ENCODE measurements at regions of chr19 and their contacts with region 1.

Region 1: GRCh38 chr19:43555185-43555770 is 20.0 kb downstream of the XRCC1 start:
- DNase-seq: peak; percentile 87
- H3K4me3 Mint-ChIP-seq: no peak overlapping the region
- H3K27ac Mint-ChIP-seq: peak overlapping the region; percentile 38
- H3K4me1 Mint-ChIP-seq: peaks cover 9% of the 10 kb centered on the region
- H3K27me3 Mint-ChIP-seq: no peaks in the 10 kb centered on the region

Region 2: GRCh38 chr19:43407416-43408005 is 147.8 kb before region 1 on chr19:
- CTCF ChIA-PET with region 1: no interaction called
- POLR2A ChIA-PET with region 1: no interaction called
- intact Hi-C with region 1: no loop called
- DNase-seq: no peak
- H3K4me3 Mint-ChIP-seq: no peak overlapping the region
- H3K27ac Mint-ChIP-seq: no peak overlapping the region
- H3K4me1 Mint-ChIP-seq: no peaks in the 10 kb centered on the region
- H3K27me3 Mint-ChIP-seq: peaks cover 4% of the 10 kb centered on the region

Region 3: DNA sequence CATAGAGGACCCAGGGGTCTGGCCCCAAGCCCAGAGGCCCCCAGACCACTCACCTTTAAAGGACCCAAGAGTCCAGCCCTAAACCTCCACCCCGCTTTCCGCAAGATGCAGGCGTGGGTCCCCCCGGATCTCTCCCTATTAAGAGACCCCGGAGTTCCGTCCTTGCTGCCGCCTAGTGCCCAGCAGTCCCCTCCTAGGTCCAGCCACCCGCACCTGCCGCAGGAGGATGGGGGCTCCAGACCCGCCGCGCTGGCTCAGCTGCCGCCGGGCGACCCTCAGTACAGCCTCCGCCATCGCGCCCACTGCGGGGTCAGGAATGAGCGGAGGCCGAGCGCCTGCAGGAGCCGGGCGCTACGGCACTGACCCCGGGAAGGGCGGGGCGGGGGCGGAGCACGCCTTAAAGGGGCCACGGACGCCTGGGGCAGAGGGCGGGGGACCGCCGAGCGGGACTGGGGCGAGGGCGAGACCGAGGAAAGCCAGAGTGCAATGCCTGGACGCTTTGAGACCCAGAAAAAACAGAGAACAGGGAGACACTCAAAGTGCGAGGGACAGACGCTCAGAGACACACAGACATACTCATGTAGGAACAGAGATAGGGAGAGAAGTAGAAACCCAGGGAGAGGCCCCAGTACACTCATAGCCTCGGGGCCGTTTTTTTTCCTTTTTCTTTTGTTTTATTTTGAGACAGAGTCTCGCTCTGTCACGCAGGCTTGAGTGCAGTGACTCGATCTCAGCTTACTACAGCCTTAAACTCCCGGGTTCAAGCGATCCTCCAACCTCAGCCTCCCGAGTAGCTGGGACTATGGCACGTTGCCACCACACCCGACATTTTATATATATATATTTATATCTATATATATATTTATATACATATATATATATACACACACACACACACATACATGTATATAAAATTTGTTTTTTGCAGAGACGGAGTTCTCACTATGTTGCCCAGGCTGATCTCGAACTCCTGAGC is 28.1 kb before region 1 on chr19 and contains the start of gene ETHE1:
- CTCF ChIA-PET with region 1: interaction called, 79 read pairs
- POLR2A ChIA-PET with region 1: interaction called, 3 read pairs
- intact Hi-C with region 1: no loop called
- DNase-seq: peak; percentile 85
- H3K4me3 Mint-ChIP-seq: peak within 1 kb of the TSS; percentile 92
- H3K27ac Mint-ChIP-seq: peak within 1 kb of the TSS; percentile 98
- H3K4me1 Mint-ChIP-seq: peaks cover 24% of the 10 kb centered on the region
- H3K27me3 Mint-ChIP-seq: no peaks in the 10 kb centered on the region
- total RNA-seq, gene ETHE1: 104 to 112 TPM

Region 4: DNA sequence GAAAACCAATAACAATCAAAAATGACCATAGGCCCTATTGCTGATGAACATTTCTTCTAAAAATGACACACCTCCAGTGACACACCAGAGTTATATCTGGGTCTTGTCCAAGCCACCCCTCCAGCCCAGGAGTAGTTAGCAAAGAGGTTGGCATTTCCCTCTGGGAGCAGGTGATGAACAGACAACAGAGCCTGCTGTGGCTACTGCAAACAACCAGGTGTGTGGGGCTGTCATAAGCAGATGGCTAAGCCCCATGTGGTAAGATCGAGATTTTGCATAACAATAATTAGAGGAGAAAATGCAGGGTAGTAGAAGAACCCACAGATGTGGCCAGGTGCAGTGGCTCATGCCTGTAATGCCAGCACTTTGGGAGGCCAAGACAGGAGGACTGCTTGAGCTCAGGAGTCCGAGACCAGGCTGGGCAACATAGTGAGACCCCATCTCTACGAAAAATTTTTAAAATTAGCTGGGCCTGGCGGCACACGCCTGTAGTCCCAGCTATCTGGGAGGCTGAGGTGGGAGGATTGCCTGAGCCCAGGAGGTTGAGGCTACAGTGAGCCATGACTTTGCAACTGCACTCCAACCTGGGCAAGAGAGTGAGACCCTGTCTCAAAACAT is 15.0 kb after region 1 on chr19:
- CTCF ChIA-PET with region 1: interaction called, 24 read pairs
- POLR2A ChIA-PET with region 1: no interaction called
- intact Hi-C with region 1: loop called (anchors 2 kb)
- DNase-seq: no peak
- H3K4me3 Mint-ChIP-seq: no peak overlapping the region
- H3K27ac Mint-ChIP-seq: no peak overlapping the region
- H3K4me1 Mint-ChIP-seq: peaks cover 27% of the 10 kb centered on the region
- H3K27me3 Mint-ChIP-seq: no peaks in the 10 kb centered on the region

Region 5: DNA sequence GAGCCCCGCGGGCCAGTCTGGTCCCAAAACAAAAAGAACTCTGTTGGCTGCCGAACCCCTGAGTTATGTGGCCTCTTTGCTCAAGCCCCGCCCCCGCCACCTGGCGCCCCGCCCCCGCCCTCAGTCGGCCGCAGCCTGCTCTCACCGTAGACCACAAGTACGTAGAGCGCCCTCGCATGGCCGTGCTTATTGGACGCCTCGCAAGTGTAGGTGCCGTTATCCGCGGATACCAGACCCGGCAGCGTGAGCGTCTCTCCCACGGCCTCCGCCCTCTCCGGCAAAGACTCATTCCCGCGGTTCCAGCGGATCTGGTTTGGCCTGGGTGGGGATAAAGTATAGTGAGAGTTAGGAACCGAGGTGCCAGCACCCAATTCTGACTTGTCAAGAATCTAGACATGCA is 69.7 kb after region 1 on chr19:
- CTCF ChIA-PET with region 1: interaction called, 11 read pairs
- POLR2A ChIA-PET with region 1: no interaction called
- intact Hi-C with region 1: no loop called
- DNase-seq: peak; percentile 94
- H3K4me3 Mint-ChIP-seq: no peak overlapping the region
- H3K27ac Mint-ChIP-seq: no peak overlapping the region
- H3K4me1 Mint-ChIP-seq: peaks cover 20% of the 10 kb centered on the region
- H3K27me3 Mint-ChIP-seq: peaks cover 8% of the 10 kb centered on the region

Region 6: DNA sequence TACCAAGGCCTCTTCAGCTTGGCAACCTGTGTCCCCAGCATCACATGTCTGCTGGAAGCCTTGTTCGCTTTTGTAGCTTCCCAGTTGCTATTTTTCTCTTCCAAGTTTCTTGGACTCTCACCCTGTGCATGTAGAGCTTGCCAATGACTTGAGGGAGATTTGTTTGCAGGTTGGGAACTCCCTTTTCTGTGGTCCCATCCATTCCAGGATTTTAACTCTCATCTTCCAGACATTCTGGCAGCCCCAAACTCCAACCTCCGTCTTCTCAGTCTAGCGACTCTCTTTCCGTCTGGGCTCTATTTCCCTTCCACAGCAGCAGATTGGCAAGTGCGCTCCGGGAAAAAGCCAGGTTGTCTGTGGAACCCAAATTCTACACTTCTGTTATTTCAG is 105.7 kb after region 1 on chr19:
- CTCF ChIA-PET with region 1: no interaction called
- POLR2A ChIA-PET with region 1: no interaction called
- intact Hi-C with region 1: no loop called
- DNase-seq: no peak
- H3K4me3 Mint-ChIP-seq: no peak overlapping the region
- H3K27ac Mint-ChIP-seq: no peak overlapping the region
- H3K4me1 Mint-ChIP-seq: peaks cover 21% of the 10 kb centered on the region
- H3K27me3 Mint-ChIP-seq: no peaks in the 10 kb centered on the region

Measured in activated CD4-positive, alpha-beta memory T cell treated with anti-CD3 and anti-CD28 coated beads for 36 hours (primary cell).